ENCODE measurements at regions of chr6 and their contacts with region 1.

Region 1: GRCh38 chr6:10404107-10404798 is 10.6 kb downstream of the TFAP2A start:
- DNase-seq: peak; percentile 95
- ATAC-seq: peak; percentile 90
- H3K4me3 Mint-ChIP-seq: peak overlapping the region; percentile 83
- H3K27ac Mint-ChIP-seq: peak overlapping the region; percentile 94
- H3K4me1 Mint-ChIP-seq: peaks cover 86% of the 10 kb centered on the region
- H3K27me3 Mint-ChIP-seq: peaks cover 92% of the 10 kb centered on the region
- CTCF ChIP-seq: no peak

Region 2: GRCh38 chr6:10347561-10348327 is 56.5 kb before region 1 on chr6:
- CTCF ChIA-PET with region 1: no interaction called
- POLR2A ChIA-PET with region 1: no interaction called
- DNase-seq: no peak
- ATAC-seq: no peak
- H3K4me3 Mint-ChIP-seq: no peak overlapping the region
- H3K27ac Mint-ChIP-seq: no peak overlapping the region
- H3K4me1 Mint-ChIP-seq: no peaks in the 10 kb centered on the region
- H3K27me3 Mint-ChIP-seq: no peaks in the 10 kb centered on the region; the same call in 1 of the 2 replicates
- CTCF ChIP-seq: no peak

Region 3: DNA sequence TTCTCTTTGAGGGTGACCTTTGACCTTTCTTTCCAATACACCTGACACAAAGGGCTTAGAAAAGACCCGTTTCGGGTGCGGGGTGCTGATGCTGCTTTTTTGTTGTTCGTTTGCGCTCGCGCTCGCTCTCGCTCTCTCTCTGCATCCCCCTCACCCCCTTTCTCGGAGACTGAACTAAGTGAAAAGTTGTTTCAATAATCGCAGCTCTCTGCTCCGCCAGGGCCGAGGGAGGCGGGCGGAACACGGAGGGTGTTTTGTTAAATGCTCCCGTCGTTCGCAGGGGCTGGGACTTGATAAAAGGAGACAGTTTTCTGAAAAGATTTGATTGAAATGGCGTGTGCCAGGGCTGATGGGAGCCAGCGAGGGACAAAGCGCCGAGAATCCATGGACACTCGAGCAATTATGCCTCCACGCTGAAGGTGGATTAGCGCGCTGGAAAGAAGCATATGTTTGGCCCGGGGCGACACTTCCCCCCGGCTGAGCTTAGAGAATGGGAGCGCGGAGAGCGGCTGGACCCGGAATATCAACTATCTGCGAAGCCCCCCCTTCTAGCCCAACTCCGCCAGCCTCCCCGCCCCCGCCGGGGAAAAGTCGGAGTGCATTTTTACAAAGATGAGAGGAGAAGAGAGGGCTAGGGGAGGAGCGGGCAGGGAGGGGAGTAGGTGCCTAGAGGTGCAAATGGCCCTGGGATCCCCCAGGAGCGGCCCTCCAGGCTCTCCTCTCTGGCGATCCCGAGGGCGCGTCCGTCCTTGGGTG is 14.3 kb before region 1 on chr6:
- CTCF ChIA-PET with region 1: interaction called, 11 read pairs
- POLR2A ChIA-PET with region 1: interaction called, 3 read pairs
- DNase-seq: peak; percentile 41
- ATAC-seq: peak; percentile 8
- H3K4me3 Mint-ChIP-seq: peak overlapping the region; percentile 74
- H3K27ac Mint-ChIP-seq: no peak overlapping the region
- H3K4me1 Mint-ChIP-seq: peaks cover 82% of the 10 kb centered on the region
- H3K27me3 Mint-ChIP-seq: peaks cover 100% of the 10 kb centered on the region
- CTCF ChIP-seq: no peak